Activated CD8-positive, alpha-beta memory T cell treated with anti-CD3 and anti-CD28 coated beads, Interleukin-2, amount 10 ng/mL, durations not matched to agents 7 days and 5 days (primary cell): ENCODE measurements at regions of chr1 and their contacts with region 1.

Region 1: GRCh38 chr1:207861442-207862177 is 49.3 kb downstream of the CD34 start:
- DNase-seq: peak; percentile 82
- ATAC-seq: peak; percentile 68
- H3K4me3 Mint-ChIP-seq: peak overlapping the region; percentile 49
- H3K27ac Mint-ChIP-seq: peak overlapping the region; percentile 94
- H3K4me1 Mint-ChIP-seq: peaks cover 61% of the 10 kb centered on the region
- H3K27me3 Mint-ChIP-seq: no peaks in the 10 kb centered on the region

Region 2: DNA sequence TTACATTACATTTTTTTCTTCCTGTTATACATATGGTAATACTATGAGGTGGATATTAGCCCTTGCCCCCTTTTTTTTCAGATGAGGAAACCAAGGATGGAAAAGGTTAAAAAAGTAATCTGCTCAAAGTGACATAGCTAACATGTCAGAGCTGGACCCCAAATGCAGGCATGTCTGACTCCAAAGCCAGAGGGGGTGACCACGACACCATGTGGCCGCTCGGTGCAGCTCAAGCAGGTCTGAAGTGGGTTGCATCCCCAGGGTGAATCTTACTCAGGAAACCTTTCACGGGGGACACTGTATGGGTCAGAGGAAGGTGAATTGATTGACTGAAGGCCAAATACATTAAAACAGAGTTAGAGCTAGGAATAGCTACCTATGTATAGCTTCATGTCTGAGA is 14.5 kb after region 1 on chr1:
- CTCF ChIA-PET with region 1: interaction called, 284 read pairs
- DNase-seq: peak; percentile 55
- ATAC-seq: peak; percentile 34
- H3K4me3 Mint-ChIP-seq: no peak overlapping the region
- H3K27ac Mint-ChIP-seq: no peak overlapping the region
- H3K4me1 Mint-ChIP-seq: peaks cover 58% of the 10 kb centered on the region
- H3K27me3 Mint-ChIP-seq: no peaks in the 10 kb centered on the region